ENCODE measurements at regions of chr1 and their contacts with region 1.

Region 1: GRCh38 chr1:108882837-108883236 is 6.1 kb downstream of the GPSM2 start:
- DNase-seq: no peak
- ATAC-seq: no peak
- H3K4me3 Mint-ChIP-seq: no peak overlapping the region
- H3K27ac Mint-ChIP-seq: no peak overlapping the region
- H3K4me1 Mint-ChIP-seq: peaks cover 4% of the 10 kb centered on the region
- H3K27me3 Mint-ChIP-seq: peaks cover 3% of the 10 kb centered on the region

Region 2: GRCh38 chr1:108897865-108898720 is 15.3 kb after region 1 on chr1:
- CTCF ChIA-PET with region 1: interaction called, 12 read pairs
- POLR2A ChIA-PET with region 1: no interaction called
- intact Hi-C with region 1: no loop called
- DNase-seq: peak; percentile 24
- ATAC-seq: peak; percentile 70
- H3K4me3 Mint-ChIP-seq: no peak overlapping the region
- H3K27ac Mint-ChIP-seq: no peak overlapping the region
- H3K4me1 Mint-ChIP-seq: no peaks in the 10 kb centered on the region
- H3K27me3 Mint-ChIP-seq: no peaks in the 10 kb centered on the region

Region 3: GRCh38 chr1:109226078-109226445 is 343.2 kb after region 1 on chr1:
- CTCF ChIA-PET with region 1: no interaction called
- POLR2A ChIA-PET with region 1: no interaction called
- intact Hi-C with region 1: no loop called
- DNase-seq: no peak
- ATAC-seq: no peak
- H3K4me3 Mint-ChIP-seq: no peak overlapping the region
- H3K27ac Mint-ChIP-seq: no peak overlapping the region
- H3K4me1 Mint-ChIP-seq: peaks cover 32% of the 10 kb centered on the region
- H3K27me3 Mint-ChIP-seq: no peaks in the 10 kb centered on the region